CD4-positive, alpha-beta T cell (primary cell): ENCODE measurements at regions of chr19 and their contacts with region 1.

Region 1: DNA sequence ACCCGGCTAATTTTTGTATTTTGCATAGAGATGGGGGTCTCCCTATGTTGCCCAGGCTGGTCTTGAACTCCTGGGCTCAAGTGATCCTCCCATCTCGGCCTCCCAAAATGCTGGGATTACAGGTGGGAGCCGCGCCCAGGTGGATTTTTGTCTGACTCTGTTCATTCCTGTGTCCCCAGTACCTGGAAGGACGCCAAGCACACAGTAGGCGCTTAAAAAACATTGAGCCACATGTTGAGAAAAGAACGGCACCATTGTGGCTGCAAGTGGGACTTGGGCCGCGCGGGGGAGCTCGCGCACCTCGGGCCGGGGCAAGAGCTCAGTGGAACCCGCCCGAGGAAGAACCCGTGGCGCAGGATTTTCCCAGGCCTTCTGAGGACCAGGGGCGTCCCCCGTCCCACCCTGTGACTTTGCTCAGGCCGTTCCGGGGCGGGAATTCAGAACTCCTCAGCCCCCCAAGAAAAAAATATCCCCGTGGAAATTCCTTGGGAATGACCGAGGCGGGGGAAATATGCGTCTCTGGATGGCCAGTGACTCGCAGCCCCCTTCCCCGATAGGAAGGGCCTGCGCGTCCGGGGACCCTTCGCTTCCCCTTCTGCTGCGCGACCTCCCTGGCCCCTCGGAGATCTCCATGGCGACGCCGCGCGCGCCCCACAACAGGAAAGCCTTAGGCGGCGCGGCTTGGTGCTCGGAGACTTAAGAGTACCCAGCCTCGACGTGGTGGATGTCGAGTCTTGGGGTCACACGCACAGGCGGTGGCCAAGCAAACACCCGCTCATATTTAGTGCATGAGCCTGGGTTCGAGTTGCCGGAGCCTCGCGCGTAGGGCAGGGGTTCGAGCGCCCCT is 1.4 kb upstream of the ICAM1 start:
- DNase-seq: peak; percentile 72 to 93 (median 86)
- ATAC-seq: peak; percentile 69
- H3K4me3 ChIP-seq: peak overlapping the region; percentile 80
- H3K4me3 Mint-ChIP-seq: peak overlapping the region; percentile 86
- H3K27ac ChIP-seq: peak overlapping the region; percentile 77 to 95
- H3K27ac Mint-ChIP-seq: peak overlapping the region; percentile 80
- H3K4me1 ChIP-seq: peaks cover 36% of the 10 kb centered on the region
- H3K4me1 Mint-ChIP-seq: peaks cover 38% of the 10 kb centered on the region
- H3K27me3 ChIP-seq: no peaks in the 10 kb centered on the region
- H3K27me3 Mint-ChIP-seq: no peaks in the 10 kb centered on the region
- CTCF ChIP-seq: peak; percentile 94

Region 2: GRCh38 chr19:9934132-9934950 is 335.2 kb before region 1 on chr19:
- CTCF ChIA-PET with region 1: interaction called, 3 read pairs
- POLR2A ChIA-PET with region 1: no interaction called
- intact Hi-C with region 1: loop called in 1 of 2 experiments (anchors 5 kb)
- DNase-seq: peak; percentile 63 to 90 (median 76)
- ATAC-seq: peak; percentile 77
- H3K4me3 ChIP-seq: no peak overlapping the region
- H3K4me3 Mint-ChIP-seq: no peak overlapping the region
- H3K27ac ChIP-seq: no peak overlapping the region
- H3K27ac Mint-ChIP-seq: no peak overlapping the region
- H3K4me1 ChIP-seq: peaks cover 32% of the 10 kb centered on the region
- H3K4me1 Mint-ChIP-seq: peaks cover 33% of the 10 kb centered on the region
- H3K27me3 ChIP-seq: peaks cover 39 to 52% of the 10 kb centered on the region in 2 experiments
- H3K27me3 Mint-ChIP-seq: peaks cover 69% of the 10 kb centered on the region
- CTCF ChIP-seq: peak; percentile 80

Region 3: DNA sequence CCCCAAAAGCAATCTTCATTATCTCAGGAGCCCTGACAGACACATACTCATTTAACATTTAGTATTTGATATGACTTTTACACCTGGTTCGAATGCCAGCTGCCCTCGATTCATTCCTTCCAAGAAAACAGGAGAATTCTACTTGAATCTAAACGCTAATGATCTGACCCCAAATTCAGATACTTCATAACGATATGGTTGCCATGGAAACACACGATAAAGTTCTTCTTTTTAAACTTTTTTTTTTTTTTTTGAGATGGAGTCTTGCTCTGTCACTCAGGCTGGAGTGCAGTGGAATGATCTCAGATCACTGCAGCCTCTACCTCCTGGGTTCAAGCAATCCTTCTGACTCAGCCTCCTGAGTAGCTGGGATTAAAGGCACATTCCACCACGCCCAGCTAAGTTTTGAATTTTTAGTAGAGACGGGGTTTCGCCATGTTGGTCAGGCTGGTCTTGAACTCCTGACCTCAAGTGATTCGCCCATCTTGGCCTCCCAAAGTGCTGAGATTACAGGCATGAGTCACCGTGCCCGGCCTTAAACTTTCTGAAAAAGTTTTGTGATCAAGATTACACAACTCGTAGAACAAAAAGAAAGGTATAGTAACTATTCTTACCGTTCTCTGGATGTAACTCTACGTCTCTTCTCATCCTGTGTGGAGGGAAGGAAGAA is 96.2 kb before region 1 on chr19:
- CTCF ChIA-PET with region 1: no interaction called
- POLR2A ChIA-PET with region 1: no interaction called
- intact Hi-C with region 1: no loop called
- DNase-seq: no peak
- ATAC-seq: no peak
- H3K4me3 ChIP-seq: no peak overlapping the region
- H3K4me3 Mint-ChIP-seq: no peak overlapping the region
- H3K27ac ChIP-seq: no peak overlapping the region
- H3K27ac Mint-ChIP-seq: no peak overlapping the region
- H3K4me1 ChIP-seq: peaks cover 4% of the 10 kb centered on the region
- H3K4me1 Mint-ChIP-seq: peaks cover 3% of the 10 kb centered on the region
- H3K27me3 ChIP-seq: no peaks in the 10 kb centered on the region
- H3K27me3 Mint-ChIP-seq: no peaks in the 10 kb centered on the region
- CTCF ChIP-seq: no peak

Region 4: GRCh38 chr19:10286803-10287737 is 17.5 kb after region 1 on chr19 and contains the start of gene ICAM4:
- CTCF ChIA-PET with region 1: interaction called, 21 read pairs
- POLR2A ChIA-PET with region 1: interaction called, 39 read pairs
- intact Hi-C with region 1: loop called in 1 of 2 experiments (anchors 2 kb)
- DNase-seq: peak in 5 of 14 experiments; percentile 17 to 58 (median 43)
- ATAC-seq: peak; percentile 22
- H3K4me3 ChIP-seq: peak within 1 kb of the TSS; percentile 32
- H3K4me3 Mint-ChIP-seq: peak within 1 kb of the TSS; percentile 62
- H3K27ac ChIP-seq: no peak within 1 kb of the TSS
- H3K27ac Mint-ChIP-seq: no peak within 1 kb of the TSS
- H3K4me1 ChIP-seq: peaks cover 64% of the 10 kb centered on the region
- H3K4me1 Mint-ChIP-seq: peaks cover 63% of the 10 kb centered on the region
- H3K27me3 ChIP-seq: peaks cover 48 to 49% of the 10 kb centered on the region in 2 experiments
- H3K27me3 Mint-ChIP-seq: peaks cover 50% of the 10 kb centered on the region
- CTCF ChIP-seq: no peak
- total RNA-seq, gene ICAM4: 0.52 to 0.70 TPM

Region 5: GRCh38 chr19:10315335-10316214 is 46.0 kb after region 1 on chr19 and contains the start of gene FDX2:
- CTCF ChIA-PET with region 1: interaction called, 4 read pairs
- POLR2A ChIA-PET with region 1: interaction called, 6 read pairs
- intact Hi-C with region 1: loop called in 1 of 2 experiments (anchors 5 kb)
- DNase-seq: peak; percentile 84 to 95 (median 88)
- ATAC-seq: peak; percentile 93
- H3K4me3 ChIP-seq: peak within 1 kb of the TSS; percentile 79
- H3K4me3 Mint-ChIP-seq: peak within 1 kb of the TSS; percentile 72
- H3K27ac ChIP-seq: peak within 1 kb of the TSS in 1 of 2 donors; percentile 35
- H3K27ac Mint-ChIP-seq: peak within 1 kb of the TSS; percentile 70
- H3K4me1 ChIP-seq: peaks cover 19% of the 10 kb centered on the region
- H3K4me1 Mint-ChIP-seq: peaks cover 17% of the 10 kb centered on the region
- H3K27me3 ChIP-seq: no peaks in the 10 kb centered on the region
- H3K27me3 Mint-ChIP-seq: no peaks in the 10 kb centered on the region
- CTCF ChIP-seq: no peak
- total RNA-seq, gene FDX2: 1.2 to 1.9 TPM

Region 6: DNA sequence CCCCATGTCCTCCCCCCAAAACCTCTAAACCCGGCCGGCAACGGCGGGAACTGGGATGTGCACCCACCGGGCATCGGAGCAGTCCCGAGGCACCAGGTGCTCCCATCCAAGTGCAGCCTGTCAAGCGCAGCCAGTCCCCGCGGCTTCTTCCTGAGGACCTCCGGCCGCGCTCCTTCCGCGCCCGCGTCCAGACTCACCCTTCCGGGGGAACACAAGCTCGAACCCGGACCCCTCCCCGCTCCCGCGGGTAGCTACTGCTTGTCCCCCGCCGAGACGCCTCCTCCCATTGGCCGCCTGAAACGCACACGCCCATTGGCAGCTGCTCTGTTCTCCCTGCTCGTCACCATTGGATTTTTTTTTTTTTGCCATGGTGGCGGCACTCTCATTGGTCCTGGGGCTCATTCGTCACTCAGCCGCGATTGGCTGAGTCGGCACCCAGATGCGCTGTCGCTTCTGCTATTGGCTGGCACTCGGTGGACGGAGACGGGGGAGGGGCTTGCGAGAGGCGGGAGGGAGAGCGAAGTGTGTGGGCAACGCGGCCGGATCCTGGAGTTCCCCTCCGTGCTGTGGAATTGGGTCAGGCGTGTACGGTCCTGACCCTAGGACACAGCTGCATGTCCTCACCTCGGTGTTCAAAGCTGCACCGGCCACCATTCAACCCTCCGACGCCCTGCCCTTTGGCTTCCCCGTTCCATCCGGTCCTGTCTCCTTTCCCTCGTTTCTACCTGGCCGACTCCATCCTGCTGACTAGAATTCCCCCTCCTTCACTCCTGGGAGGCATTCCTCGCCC is 111.0 kb after region 1 on chr19 and contains the start of gene TYK2:
- CTCF ChIA-PET with region 1: interaction called, 12 read pairs
- POLR2A ChIA-PET with region 1: interaction called, 51 read pairs
- intact Hi-C with region 1: no loop called
- DNase-seq: peak; percentile 88 to 99 (median 95)
- ATAC-seq: peak; percentile 96
- H3K4me3 ChIP-seq: peak within 1 kb of the TSS; percentile 81
- H3K4me3 Mint-ChIP-seq: peak within 1 kb of the TSS; percentile 92
- H3K27ac ChIP-seq: peak within 1 kb of the TSS; percentile 81 to 84
- H3K27ac Mint-ChIP-seq: peak within 1 kb of the TSS; percentile 77
- H3K4me1 ChIP-seq: peaks cover 25% of the 10 kb centered on the region
- H3K4me1 Mint-ChIP-seq: peaks cover 24% of the 10 kb centered on the region
- H3K27me3 ChIP-seq: no peaks in the 10 kb centered on the region
- H3K27me3 Mint-ChIP-seq: no peaks in the 10 kb centered on the region
- CTCF ChIP-seq: no peak
- total RNA-seq, gene TYK2: 229 to 253 TPM